Activated CD4-positive, alpha-beta T cell treated with anti-CD3 and anti-CD28 coated beads for 36 hours (primary cell): ENCODE measurements at regions of chr19 and their contacts with region 1.

Region 1: DNA sequence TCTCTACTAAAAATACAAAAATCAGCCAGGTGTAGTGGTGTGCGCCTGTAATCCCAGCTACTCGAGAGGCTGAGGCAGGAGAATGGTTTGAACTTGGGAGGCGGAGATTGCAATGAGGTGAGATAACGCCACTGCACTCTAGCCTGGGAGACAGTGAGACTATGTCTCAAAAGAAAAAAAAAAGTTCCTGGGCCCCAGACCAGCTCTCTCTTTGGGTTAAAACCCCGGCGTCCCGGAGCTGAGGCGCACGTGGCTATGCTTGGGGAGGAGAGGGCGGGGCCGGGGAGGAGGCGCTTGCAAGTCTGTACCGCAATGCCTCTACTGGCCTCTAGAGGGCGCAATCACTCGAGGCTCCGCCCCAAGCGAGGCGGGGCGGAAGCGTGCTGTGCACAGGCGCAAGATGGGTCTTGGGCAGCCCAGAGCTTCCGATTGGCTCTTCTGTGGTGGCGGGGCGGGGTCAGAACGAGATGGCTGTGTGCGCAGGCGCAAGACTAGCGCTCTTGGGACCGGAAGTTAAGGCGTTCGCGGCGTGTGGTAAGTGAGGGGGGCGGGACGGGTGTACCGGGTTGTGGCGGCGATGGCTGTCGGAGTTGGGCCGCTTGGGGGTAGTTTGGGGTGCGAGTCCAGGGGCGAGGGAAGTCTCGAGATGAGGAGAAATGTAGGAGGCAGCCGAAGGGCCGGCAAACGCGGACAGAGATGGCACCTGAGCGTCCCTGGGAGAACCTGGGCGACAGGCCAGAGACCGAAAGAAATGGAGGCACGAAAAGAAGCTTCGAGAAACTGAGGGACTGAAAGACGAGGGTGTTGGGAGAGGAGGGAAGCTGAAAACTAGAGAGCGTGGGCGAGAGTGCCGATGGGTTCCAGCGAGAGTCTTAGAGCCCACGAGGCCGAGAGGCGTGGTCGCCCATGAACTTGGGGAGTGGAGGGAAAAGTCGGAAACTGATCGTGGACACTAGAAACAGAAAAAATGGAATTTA is at the start of gene DHX34:
- DNase-seq: peak; percentile 99
- ATAC-seq: peak; percentile 98
- H3K4me3 Mint-ChIP-seq: peak within 1 kb of the TSS; percentile 92
- H3K27ac Mint-ChIP-seq: peak within 1 kb of the TSS; percentile 94
- H3K4me1 Mint-ChIP-seq: peaks cover 35% of the 10 kb centered on the region
- H3K27me3 Mint-ChIP-seq: no peaks in the 10 kb centered on the region
- total RNA-seq, gene DHX34: 15.4 to 17.9 TPM

Region 2: GRCh38 chr19:46717034-46717723 is 631.9 kb before region 1 on chr19 and contains the start of gene PRKD2:
- CTCF ChIA-PET with region 1: no interaction called
- POLR2A ChIA-PET with region 1: no interaction called
- intact Hi-C with region 1: loop called in 1 of 2 experiments (anchors 10 kb)
- DNase-seq: peak; percentile 95
- ATAC-seq: peak; percentile 66
- H3K4me3 Mint-ChIP-seq: peak within 1 kb of the TSS; percentile 94
- H3K27ac Mint-ChIP-seq: peak within 1 kb of the TSS; percentile 95
- H3K4me1 Mint-ChIP-seq: peaks cover 40% of the 10 kb centered on the region
- H3K27me3 Mint-ChIP-seq: no peaks in the 10 kb centered on the region
- total RNA-seq, gene PRKD2: 76.0 to 78.3 TPM

Region 3: DNA sequence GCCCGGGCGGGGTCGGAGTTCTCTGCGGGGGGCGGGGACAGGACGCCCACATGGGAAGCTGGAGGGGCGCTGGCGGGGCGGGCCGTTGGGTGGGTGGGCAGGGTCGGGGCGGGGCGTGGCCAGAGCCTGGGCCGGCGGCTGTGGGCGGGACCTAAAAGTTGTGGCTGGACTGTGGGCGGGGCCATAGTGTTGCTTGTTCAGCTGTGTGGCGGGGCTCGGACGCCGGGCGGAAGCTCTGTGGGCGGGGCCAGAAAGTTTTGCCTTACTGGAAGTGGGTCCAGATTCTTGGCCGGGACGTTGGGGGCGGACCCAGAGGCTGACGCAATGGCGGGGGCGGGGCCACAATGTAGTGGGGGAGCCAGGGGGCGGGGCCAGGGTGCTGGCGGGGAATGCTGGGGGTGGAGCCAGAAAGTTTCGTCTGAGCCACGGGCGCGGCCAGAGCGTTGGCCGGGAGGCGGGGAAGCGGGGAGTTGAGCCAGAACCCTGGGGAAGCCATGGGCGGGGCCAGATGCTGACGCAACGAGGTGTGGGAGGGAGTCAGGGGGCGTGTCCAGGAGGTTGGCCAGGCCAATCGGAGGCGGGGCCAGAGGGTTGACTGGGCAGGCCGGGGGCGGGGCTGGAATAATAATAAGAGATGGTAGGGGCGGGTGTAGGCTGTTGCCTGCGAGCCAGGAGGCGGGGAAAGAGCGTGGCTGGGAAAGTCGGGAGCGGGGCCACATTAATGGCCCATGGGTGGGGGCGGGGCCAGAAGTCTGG is 92.2 kb before region 1 on chr19:
- CTCF ChIA-PET with region 1: interaction called, 3 read pairs
- POLR2A ChIA-PET with region 1: no interaction called
- intact Hi-C with region 1: loop called in 1 of 2 experiments (anchors 1 kb)
- DNase-seq: peak; percentile 100
- ATAC-seq: peak; percentile 86
- H3K4me3 Mint-ChIP-seq: peak overlapping the region; percentile 90
- H3K27ac Mint-ChIP-seq: peak overlapping the region; percentile 93
- H3K4me1 Mint-ChIP-seq: peaks cover 31% of the 10 kb centered on the region
- H3K27me3 Mint-ChIP-seq: no peaks in the 10 kb centered on the region

Region 4: DNA sequence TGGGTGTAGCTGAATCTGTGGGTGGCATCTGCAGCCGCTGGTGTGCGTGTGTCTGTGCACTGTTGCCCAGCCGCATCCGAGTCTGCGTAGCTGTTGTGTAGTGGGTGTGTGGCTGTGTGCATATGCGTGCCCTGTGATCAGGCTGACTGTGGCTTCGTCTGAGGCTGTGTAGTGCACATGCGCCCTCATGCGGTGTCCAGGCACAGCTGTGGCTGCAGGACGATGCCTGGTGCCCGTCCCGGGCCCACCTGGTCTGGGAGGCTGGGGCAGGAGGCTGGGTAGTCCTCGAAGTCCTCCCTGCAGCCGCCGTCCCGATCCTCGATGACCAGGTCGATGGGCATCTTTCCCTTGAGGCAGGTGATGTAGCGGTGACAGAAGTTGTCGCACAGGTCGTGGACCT is 65.4 kb after region 1 on chr19:
- CTCF ChIA-PET with region 1: no interaction called
- POLR2A ChIA-PET with region 1: no interaction called
- intact Hi-C with region 1: no loop called
- DNase-seq: no peak
- ATAC-seq: no peak
- H3K4me3 Mint-ChIP-seq: no peak overlapping the region
- H3K27ac Mint-ChIP-seq: no peak overlapping the region
- H3K4me1 Mint-ChIP-seq: peaks cover 14% of the 10 kb centered on the region
- H3K27me3 Mint-ChIP-seq: peaks cover 42% of the 10 kb centered on the region

Region 5: GRCh38 chr19:47514869-47515588 is 165.9 kb after region 1 on chr19 and contains the start of gene NAPA:
- CTCF ChIA-PET with region 1: interaction called, 7 read pairs
- POLR2A ChIA-PET with region 1: no interaction called
- intact Hi-C with region 1: loop called in 1 of 2 experiments (anchors 1 kb)
- DNase-seq: peak; percentile 100
- ATAC-seq: peak; percentile 98
- H3K4me3 Mint-ChIP-seq: peak within 1 kb of the TSS; percentile 95
- H3K27ac Mint-ChIP-seq: peak within 1 kb of the TSS; percentile 99
- H3K4me1 Mint-ChIP-seq: peaks cover 76% of the 10 kb centered on the region
- H3K27me3 Mint-ChIP-seq: no peaks in the 10 kb centered on the region
- total RNA-seq, gene NAPA: 54.2 to 68.8 TPM

Region 6: GRCh38 chr19:47608074-47608918 is 259.2 kb after region 1 on chr19:
- CTCF ChIA-PET with region 1: interaction called, 3 read pairs
- POLR2A ChIA-PET with region 1: no interaction called
- intact Hi-C with region 1: loop called (anchors 1 to 10 kb)
- DNase-seq: peak; percentile 97
- ATAC-seq: peak; percentile 93
- H3K4me3 Mint-ChIP-seq: peak overlapping the region; percentile 79
- H3K27ac Mint-ChIP-seq: peak overlapping the region; percentile 72
- H3K4me1 Mint-ChIP-seq: peaks cover 27% of the 10 kb centered on the region
- H3K27me3 Mint-ChIP-seq: no peaks in the 10 kb centered on the region

Region 7: GRCh38 chr19:48255376-48256303 is 906.5 kb after region 1 on chr19 and contains the start of gene CARD8:
- CTCF ChIA-PET with region 1: no interaction called
- POLR2A ChIA-PET with region 1: no interaction called
- intact Hi-C with region 1: loop called in 1 of 2 experiments (anchors 5 kb)
- DNase-seq: peak; percentile 89
- ATAC-seq: peak; percentile 89
- H3K4me3 Mint-ChIP-seq: peak within 1 kb of the TSS; percentile 92
- H3K27ac Mint-ChIP-seq: peak within 1 kb of the TSS; percentile 98
- H3K4me1 Mint-ChIP-seq: peaks cover 63% of the 10 kb centered on the region
- H3K27me3 Mint-ChIP-seq: no peaks in the 10 kb centered on the region
- total RNA-seq, gene CARD8: 109 to 118 TPM